Psoas muscle (tissue), 8 donors: ENCODE measurements at regions of chr1 and their contacts with region 1.

Region 1: DNA sequence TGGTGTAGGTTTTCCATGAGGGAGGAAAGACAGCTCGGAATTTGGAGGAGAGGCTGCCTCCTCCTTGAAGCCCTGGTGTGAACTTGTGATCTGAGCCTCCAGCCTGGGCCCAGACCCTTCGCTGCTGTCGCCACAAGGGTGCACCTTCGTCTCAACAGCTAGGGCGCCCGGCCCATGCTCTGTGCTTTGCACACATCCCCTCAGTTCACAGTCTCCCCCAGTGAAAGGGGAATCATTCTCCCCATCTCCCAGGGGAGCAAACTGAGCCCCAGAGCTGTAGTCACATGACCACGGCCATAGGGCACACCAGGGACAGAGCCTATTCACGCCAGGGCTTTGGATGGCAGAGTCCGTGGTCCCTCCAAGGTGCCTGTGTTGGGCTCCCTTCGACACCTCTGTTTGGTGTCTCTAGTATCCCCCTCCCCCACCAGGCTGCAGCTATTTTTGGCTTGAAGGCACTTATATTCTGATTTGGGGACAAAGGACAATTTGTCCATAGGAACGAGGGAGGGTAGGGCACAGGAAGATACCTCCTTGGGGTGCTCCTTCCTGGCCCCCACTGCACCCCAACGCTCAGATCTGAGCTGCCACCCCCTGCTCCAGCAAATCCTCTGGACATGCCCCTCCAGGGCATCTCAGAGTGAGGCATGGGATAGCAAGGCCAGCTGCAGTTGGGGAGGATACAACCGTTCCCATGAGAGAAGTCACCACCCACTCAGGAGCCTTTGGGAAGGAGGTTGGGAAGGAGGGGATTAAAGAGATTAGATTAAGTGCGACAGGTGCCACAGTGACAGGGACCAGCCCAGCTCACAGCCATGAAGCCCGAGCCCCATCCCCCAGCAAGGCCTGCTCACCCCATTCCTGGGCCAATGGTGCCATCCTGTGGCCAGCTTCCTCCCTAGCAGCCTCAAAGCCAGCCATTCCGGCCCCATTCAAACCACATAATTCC is 15.7 kb downstream of the MATN1 start:
- DNase-seq: peak; percentile 74 to 90
- ATAC-seq: peak; percentile 94 to 97 (median 94)
- H3K4me3 ChIP-seq: no peak overlapping the region
- H3K27ac ChIP-seq: no peak overlapping the region
- H3K4me1 ChIP-seq: peaks cover 4% of the 10 kb centered on the region
- H3K27me3 ChIP-seq: peaks cover 0 to under 1% (median 0%) of the 10 kb centered on the region in 3 donors
- CTCF ChIP-seq: peak; percentile 91

Region 2: GRCh38 chr1:28893403-28894102 is 1814.1 kb before region 1 on chr1:
- intact Hi-C with region 1: loop called in 1 of 2 experiments (anchors 5 kb)
- DNase-seq: peak in 1 of 2 donors; percentile 29
- ATAC-seq: peak in 2 of 4 donors; percentile 38 to 51
- H3K4me3 ChIP-seq: no peak overlapping the region
- H3K27ac ChIP-seq: no peak overlapping the region
- H3K4me1 ChIP-seq: no peaks in the 10 kb centered on the region
- H3K27me3 ChIP-seq: no peaks in the 10 kb centered on the region
- CTCF ChIP-seq: peak; percentile 5

Region 3: DNA sequence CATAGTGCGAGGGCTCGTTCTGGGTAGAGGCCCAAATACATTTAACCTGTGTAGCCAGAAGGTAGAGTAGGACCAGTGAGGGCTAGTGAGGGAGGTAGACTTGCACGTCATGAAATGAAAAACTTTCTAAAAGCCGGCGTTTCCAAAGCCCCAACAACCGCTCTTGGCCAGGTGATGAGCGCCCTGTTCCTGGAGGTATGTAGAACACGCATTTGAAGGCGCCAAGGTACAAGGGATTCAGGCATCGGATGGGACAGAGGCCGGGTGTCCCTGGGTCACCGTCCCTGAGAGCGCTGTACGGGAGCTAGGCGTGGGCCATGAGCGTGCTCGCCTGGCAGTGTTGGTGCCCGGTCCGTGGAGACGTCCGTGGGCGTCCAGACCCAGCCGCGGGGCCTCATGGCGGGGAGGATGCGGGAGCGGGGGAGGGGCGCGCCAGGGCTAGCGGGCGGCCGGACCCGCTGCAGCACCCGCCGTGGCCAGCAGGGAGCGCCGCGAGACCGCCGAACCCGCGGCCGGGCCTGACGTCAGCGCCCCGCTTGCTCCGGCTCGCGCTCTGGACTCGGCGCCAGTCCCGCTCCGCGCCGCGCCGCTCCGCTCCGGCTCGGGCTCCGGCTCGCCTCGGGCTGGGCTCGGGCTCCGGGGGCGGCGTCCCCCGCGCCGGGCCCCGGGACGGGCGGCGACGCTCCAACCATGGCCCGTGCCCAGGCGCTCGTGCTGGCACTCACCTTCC is 1471.6 kb before region 1 on chr1 and contains the start of gene PTPRU:
- intact Hi-C with region 1: loop called (anchors 2 to 5 kb)
- DNase-seq: peak; percentile 81 to 90
- ATAC-seq: peak; percentile 80 to 86 (median 80)
- H3K4me3 ChIP-seq: peak within 1 kb of the TSS; percentile 83
- H3K27ac ChIP-seq: peak within 1 kb of the TSS; percentile 84
- H3K4me1 ChIP-seq: peaks cover 6% of the 10 kb centered on the region
- H3K27me3 ChIP-seq: no peaks in the 10 kb centered on the region
- CTCF ChIP-seq: peak; percentile 97
- total RNA-seq, gene PTPRU: 22.5 to 51.4 (median 28.6) TPM

Region 4: DNA sequence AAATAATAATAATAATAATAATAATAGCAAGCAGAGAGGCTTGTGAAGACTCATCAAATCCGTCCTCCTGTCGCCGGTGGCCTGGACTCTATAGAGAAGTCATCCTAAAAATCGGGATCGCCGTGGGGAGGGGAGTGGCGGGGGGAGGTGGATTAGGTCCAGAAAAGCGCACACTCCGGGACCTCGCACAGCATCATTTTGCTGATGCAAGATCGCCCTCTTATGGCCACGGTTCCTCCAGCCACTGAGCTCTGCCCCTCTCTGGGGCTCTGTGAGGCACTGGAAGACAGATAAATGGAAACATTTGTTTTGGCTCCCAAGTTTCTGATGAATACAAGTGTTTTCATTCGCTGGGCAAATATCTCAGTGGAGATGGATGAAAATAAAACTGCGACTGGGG is 596.3 kb before region 1 on chr1:
- intact Hi-C with region 1: loop called in 1 of 2 experiments (anchors 10 kb)
- DNase-seq: peak in 1 of 2 donors; percentile 39
- ATAC-seq: peak; percentile 55 to 59 (median 57)
- H3K4me3 ChIP-seq: no peak overlapping the region
- H3K27ac ChIP-seq: no peak overlapping the region
- H3K4me1 ChIP-seq: no peaks in the 10 kb centered on the region
- H3K27me3 ChIP-seq: peaks cover 0 to 61% (median 10%) of the 10 kb centered on the region in 3 donors
- CTCF ChIP-seq: peak; percentile 42

Region 5: GRCh38 chr1:30379684-30380624 is 327.7 kb before region 1 on chr1:
- intact Hi-C with region 1: loop called in 1 of 2 experiments (anchors 5 kb)
- DNase-seq: no peak
- ATAC-seq: peak; percentile 69 to 89 (median 85)
- H3K4me3 ChIP-seq: no peak overlapping the region
- H3K27ac ChIP-seq: no peak overlapping the region
- H3K4me1 ChIP-seq: no peaks in the 10 kb centered on the region
- H3K27me3 ChIP-seq: peaks cover 0 to 3% (median 0%) of the 10 kb centered on the region in 3 donors
- CTCF ChIP-seq: peak; percentile 84

Region 6: DNA sequence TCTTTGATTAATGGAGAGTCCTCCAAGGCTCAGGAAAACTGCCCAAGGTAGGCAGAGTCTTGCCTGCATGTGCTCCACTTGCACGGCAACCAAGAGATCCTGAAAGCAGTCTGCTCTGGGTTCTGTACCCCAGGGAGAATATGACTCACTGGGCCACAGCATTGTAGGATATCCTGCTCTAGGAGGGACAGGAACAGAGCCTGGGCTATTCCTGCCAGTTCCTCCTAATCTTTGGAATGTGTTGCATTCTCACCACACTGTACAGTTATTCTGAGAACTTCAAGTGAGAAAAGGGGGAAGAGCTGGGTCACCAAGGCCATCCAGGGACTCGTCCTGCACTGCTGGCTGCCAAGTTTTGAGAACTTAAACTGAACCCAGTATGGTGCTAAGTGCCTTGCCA is 262.8 kb before region 1 on chr1:
- intact Hi-C with region 1: no loop called
- DNase-seq: no peak
- ATAC-seq: no peak
- H3K4me3 ChIP-seq: no peak overlapping the region
- H3K27ac ChIP-seq: no peak overlapping the region
- H3K4me1 ChIP-seq: no peaks in the 10 kb centered on the region
- H3K27me3 ChIP-seq: no peaks in the 10 kb centered on the region
- CTCF ChIP-seq: no peak

Region 7: DNA sequence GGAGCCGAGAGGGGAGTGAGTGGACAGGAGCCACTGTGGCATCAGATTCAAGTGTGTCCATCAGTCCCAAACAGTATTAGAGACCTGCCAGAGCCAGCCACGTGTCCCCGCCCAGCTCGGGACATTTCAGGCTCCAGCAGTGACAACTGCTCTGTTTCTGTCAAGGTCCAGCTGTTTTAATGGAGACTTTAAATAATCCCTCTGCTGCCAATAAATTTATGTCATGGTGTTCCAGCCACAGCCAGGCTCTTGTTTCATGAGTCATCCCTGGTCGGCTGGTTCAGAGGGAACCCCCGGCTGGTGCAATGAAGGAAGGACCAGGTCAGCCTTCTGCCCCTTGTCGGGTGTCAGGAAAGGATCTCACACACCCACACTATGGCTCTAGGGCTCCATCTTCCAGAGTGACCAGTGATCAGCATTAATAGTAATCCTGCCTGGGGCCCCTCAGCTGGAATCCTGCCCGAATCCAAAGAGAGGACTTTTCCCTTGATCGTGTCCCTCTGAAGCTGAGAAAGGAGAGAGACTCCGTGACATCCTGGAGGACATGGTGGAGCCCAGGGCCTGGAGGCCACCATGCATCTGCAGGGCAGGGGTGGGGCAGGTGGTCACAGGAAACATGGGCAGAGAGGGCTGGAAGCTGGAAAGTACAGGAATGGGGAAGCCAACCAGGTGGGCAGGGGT is 181.6 kb before region 1 on chr1:
- intact Hi-C with region 1: loop called in 1 of 2 experiments (anchors 5 kb)
- DNase-seq: peak; percentile 71 to 82
- ATAC-seq: peak; percentile 55 to 67 (median 60)
- H3K4me3 ChIP-seq: no peak overlapping the region
- H3K27ac ChIP-seq: peak overlapping the region; percentile 90
- H3K4me1 ChIP-seq: peaks cover 58% of the 10 kb centered on the region
- H3K27me3 ChIP-seq: no peaks in the 10 kb centered on the region
- CTCF ChIP-seq: no peak

Region 8: GRCh38 chr1:30743584-30744059 is 35.9 kb after region 1 on chr1:
- intact Hi-C with region 1: no loop called
- DNase-seq: no peak
- ATAC-seq: peak in 1 of 4 donors; percentile 27
- H3K4me3 ChIP-seq: no peak overlapping the region
- H3K27ac ChIP-seq: no peak overlapping the region
- H3K4me1 ChIP-seq: no peaks in the 10 kb centered on the region
- H3K27me3 ChIP-seq: no peaks in the 10 kb centered on the region
- CTCF ChIP-seq: no peak